Tibial artery (tissue), 4 donors: ENCODE measurements at regions of chr2 and their contacts with region 1.

Region 1: DNA sequence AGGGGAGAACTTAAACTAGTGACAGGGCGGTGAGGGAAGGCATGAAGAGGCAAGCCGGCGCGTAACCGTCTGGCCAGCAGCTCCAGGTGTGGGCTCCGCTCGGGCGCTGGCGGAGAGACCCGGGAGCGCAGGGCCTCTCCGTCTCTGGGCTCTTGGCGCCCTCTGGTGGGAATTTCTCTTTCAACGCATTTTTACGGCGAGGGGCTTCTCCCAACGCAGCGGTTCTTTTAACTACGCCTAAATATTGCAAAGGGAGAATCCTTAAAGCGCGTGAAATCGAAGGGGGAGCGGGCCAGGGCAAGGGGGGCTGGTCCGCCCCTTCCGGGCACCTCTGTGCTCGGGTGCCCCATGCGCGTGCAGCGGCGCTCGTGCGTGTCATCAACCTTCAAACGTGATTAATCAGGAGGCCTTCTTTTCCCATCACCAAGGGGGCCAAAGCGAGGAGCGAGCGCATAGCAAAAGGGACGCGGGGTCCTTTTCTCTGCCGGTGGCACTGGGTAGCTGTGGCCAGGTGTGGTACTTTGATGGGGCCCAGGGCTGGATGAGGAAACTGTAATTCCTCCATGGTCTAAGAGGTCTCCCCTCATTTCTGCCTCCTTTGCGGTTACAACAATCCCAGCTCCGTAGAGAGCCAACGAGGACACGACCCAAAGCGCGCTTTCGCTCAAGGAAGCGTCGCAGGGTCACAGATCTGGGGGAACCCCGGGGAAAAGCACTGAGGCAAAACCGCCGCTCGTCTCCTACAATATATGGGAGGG is 762 bp upstream of the GAD1 start:
- DNase-seq: peak in 1 of 2 donors; percentile 77
- H3K4me3 ChIP-seq: peak overlapping the region; percentile 51 to 68
- H3K27ac ChIP-seq: peak overlapping the region; percentile 61 to 80
- H3K4me1 ChIP-seq: peaks cover 0 to 59% (median 46%) of the 10 kb centered on the region in 4 donors
- H3K27me3 ChIP-seq: peaks cover 8 to 65% of the 10 kb centered on the region in 2 donors
- CTCF ChIP-seq: peak; percentile 83 to 87

Region 2: GRCh38 chr2:170361090-170361936 is 454.6 kb before region 1 on chr2:
- intact Hi-C with region 1: loop called (anchors 5 kb)
- DNase-seq: no peak
- H3K4me3 ChIP-seq: no peak overlapping the region
- H3K27ac ChIP-seq: no peak overlapping the region
- H3K4me1 ChIP-seq: no peaks in the 10 kb centered on the region
- H3K27me3 ChIP-seq: peaks cover 0 to 1% of the 10 kb centered on the region in 2 donors
- CTCF ChIP-seq: peak; percentile 47 to 52

Region 3: DNA sequence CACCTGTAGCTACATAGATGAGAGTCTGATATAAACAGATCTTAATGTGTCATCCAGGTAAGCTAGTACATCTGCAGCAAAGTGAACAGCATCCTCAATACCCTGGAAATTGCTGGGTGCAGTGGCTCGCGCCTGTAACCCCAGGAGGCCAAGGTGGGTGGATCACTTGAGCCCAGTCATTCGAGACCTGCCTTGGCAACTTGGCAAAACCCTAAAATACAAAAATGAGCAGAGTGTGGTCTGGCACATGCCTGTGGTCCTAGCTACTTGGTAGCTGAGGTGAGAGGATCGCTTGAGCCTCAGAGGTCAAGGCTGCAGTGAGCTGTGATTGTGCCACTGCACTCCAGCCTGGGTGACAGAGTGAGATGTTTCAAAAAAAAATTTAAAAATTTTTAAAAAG is 334.7 kb before region 1 on chr2:
- intact Hi-C with region 1: loop called (anchors 5 kb)
- DNase-seq: no peak
- H3K4me3 ChIP-seq: no peak overlapping the region
- H3K27ac ChIP-seq: no peak overlapping the region
- H3K4me1 ChIP-seq: no peaks in the 10 kb centered on the region
- H3K27me3 ChIP-seq: no peaks in the 10 kb centered on the region
- CTCF ChIP-seq: no peak

Region 4: GRCh38 chr2:170715062-170715931 is 100.6 kb before region 1 on chr2 and contains the start of gene SP5:
- intact Hi-C with region 1: loop called (anchors 5 kb)
- DNase-seq: peak; percentile 51 to 78
- H3K4me3 ChIP-seq: peak within 1 kb of the TSS; percentile 47 to 63
- H3K27ac ChIP-seq: peak within 1 kb of the TSS in 1 of 2 donors; percentile 55
- H3K4me1 ChIP-seq: peaks cover 0 to 52% (median 48%) of the 10 kb centered on the region in 4 donors
- H3K27me3 ChIP-seq: peaks cover 0 to 61% of the 10 kb centered on the region in 2 donors
- CTCF ChIP-seq: peak in 1 of 2 experiments; percentile 4

Region 5: GRCh38 chr2:170770606-170771420 is 45.1 kb before region 1 on chr2:
- intact Hi-C with region 1: loop called (anchors 2 kb)
- DNase-seq: peak; percentile 57 to 86
- H3K4me3 ChIP-seq: peak overlapping the region; percentile 68 to 70
- H3K27ac ChIP-seq: peak overlapping the region; percentile 85 to 90
- H3K4me1 ChIP-seq: peaks cover 0 to 17% (median 2%) of the 10 kb centered on the region in 4 donors
- H3K27me3 ChIP-seq: no peaks in the 10 kb centered on the region
- CTCF ChIP-seq: no peak